Naive thymus-derived CD4-positive, alpha-beta T cell (primary cell): ENCODE measurements at regions of chr12 and their contacts with region 1.

Region 1: DNA sequence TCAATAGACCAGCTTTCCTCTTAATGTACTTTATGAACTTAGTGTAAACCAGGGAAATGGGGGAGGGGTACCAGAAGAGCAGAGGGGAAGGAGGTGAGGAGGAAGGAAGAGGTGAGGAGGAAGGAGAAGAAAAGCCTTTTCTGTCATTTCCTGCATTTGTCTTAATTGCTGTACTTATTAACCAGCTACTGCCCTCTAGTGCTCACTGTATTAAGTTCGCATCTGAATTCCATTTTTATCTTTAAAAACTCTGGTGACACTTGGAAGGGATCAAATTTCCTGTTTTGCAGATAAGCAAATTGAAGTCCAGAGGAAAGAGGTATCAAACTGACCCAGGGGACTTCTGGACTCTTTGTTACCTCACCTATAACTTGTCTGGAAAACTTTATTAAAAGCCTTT is 22.2 kb downstream of the MANSC1 start:
- DNase-seq: peak in 7 of 9 donors; percentile 37 to 74 (median 64)
- ATAC-seq: peak; percentile 89
- H3K4me3 ChIP-seq: no peak overlapping the region
- H3K4me3 Mint-ChIP-seq: peak overlapping the region in 1 of 10 donors; percentile 23
- H3K27ac ChIP-seq: peak overlapping the region; percentile 20
- H3K27ac Mint-ChIP-seq: peak overlapping the region in 7 of 9 donors; percentile 39 to 81 (median 72)
- H3K4me1 ChIP-seq: peaks cover 0 to 7% of the 10 kb centered on the region in 2 donors
- H3K4me1 Mint-ChIP-seq: peaks cover 3 to 14% (median 10%) of the 10 kb centered on the region in 7 donors
- H3K27me3 ChIP-seq: no peaks in the 10 kb centered on the region
- H3K27me3 Mint-ChIP-seq: no peaks in the 10 kb centered on the region

Region 2: GRCh38 chr12:10771132-10771733 is 1556.6 kb before region 1 on chr12:
- CTCF ChIA-PET with region 1: no interaction called
- POLR2A ChIA-PET with region 1: no interaction called
- intact Hi-C with region 1: loop called in 1 of 2 experiments (anchors 1 kb)
- DNase-seq: peak in 7 of 9 donors; percentile 9 to 56 (median 45)
- ATAC-seq: peak; percentile 63
- H3K4me3 ChIP-seq: no peak overlapping the region
- H3K4me3 Mint-ChIP-seq: no peak overlapping the region
- H3K27ac ChIP-seq: no peak overlapping the region
- H3K27ac Mint-ChIP-seq: no peak overlapping the region
- H3K4me1 ChIP-seq: no peaks in the 10 kb centered on the region
- H3K4me1 Mint-ChIP-seq: no peaks in the 10 kb centered on the region
- H3K27me3 ChIP-seq: no peaks in the 10 kb centered on the region
- H3K27me3 Mint-ChIP-seq: peaks cover 41 to 56% (median 52%) of the 10 kb centered on the region in 5 donors

Region 3: DNA sequence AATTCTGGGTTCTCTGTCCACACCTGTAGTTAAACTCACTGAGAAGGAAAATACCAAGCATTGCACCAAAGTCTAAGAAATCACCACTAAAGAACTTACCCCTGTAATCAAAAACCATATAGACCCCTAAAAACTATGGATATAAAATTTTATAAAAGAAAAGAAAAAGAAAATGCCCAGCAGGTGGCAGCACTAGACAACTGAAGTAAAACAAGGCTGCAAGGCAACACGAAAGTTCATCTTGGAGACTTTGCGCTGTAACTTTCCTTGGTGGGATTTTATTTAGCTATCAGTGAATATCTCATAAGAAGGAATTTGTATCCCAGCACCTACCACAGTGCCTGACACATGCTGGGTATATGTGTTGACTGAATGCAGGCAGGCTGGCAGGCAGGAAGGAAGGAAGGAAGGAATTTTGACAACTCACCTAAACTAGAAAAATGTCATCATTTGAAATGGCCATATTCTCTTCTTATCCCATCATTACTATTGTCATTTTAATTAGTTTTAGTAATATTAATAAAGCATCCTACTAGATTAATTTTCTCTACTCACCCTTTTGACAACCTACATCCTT is 746.5 kb before region 1 on chr12:
- CTCF ChIA-PET with region 1: interaction called, 7 read pairs
- POLR2A ChIA-PET with region 1: no interaction called
- intact Hi-C with region 1: loop called (anchors 1 kb)
- DNase-seq: peak; percentile 22 to 73 (median 64)
- ATAC-seq: peak; percentile 60
- H3K4me3 ChIP-seq: no peak overlapping the region
- H3K4me3 Mint-ChIP-seq: peak overlapping the region in 1 of 10 donors; percentile 65
- H3K27ac ChIP-seq: no peak overlapping the region
- H3K27ac Mint-ChIP-seq: peak overlapping the region in 2 of 9 donors; percentile 28 to 88
- H3K4me1 ChIP-seq: no peaks in the 10 kb centered on the region
- H3K4me1 Mint-ChIP-seq: peaks cover 0 to 10% (median 4%) of the 10 kb centered on the region in 7 donors
- H3K27me3 ChIP-seq: no peaks in the 10 kb centered on the region
- H3K27me3 Mint-ChIP-seq: peaks cover 0 to 14% (median 0%) of the 10 kb centered on the region in 5 donors

Region 4: GRCh38 chr12:12070674-12071656 is 256.8 kb before region 1 on chr12 and contains the start of gene BCL2L14:
- CTCF ChIA-PET with region 1: interaction called, 6 read pairs
- POLR2A ChIA-PET with region 1: no interaction called
- intact Hi-C with region 1: loop called in 1 of 2 experiments (anchors 2 kb)
- DNase-seq: peak in 6 of 9 donors; percentile 11 to 34 (median 24)
- ATAC-seq: peak; percentile 40
- H3K4me3 ChIP-seq: peak within 1 kb of the TSS; percentile 47
- H3K4me3 Mint-ChIP-seq: peak within 1 kb of the TSS; percentile 65 to 92 (median 79)
- H3K27ac ChIP-seq: peak within 1 kb of the TSS; percentile 58
- H3K27ac Mint-ChIP-seq: peak within 1 kb of the TSS; percentile 52 to 96 (median 90)
- H3K4me1 ChIP-seq: peaks cover 0 to 5% of the 10 kb centered on the region in 2 donors
- H3K4me1 Mint-ChIP-seq: peaks cover 13 to 37% (median 24%) of the 10 kb centered on the region in 7 donors
- H3K27me3 ChIP-seq: no peaks in the 10 kb centered on the region
- H3K27me3 Mint-ChIP-seq: peaks cover 0 to 8% (median 0%) of the 10 kb centered on the region in 5 donors
- total RNA-seq, gene BCL2L14: 0.92 to 7.6 (median 1.4) TPM

Region 5: DNA sequence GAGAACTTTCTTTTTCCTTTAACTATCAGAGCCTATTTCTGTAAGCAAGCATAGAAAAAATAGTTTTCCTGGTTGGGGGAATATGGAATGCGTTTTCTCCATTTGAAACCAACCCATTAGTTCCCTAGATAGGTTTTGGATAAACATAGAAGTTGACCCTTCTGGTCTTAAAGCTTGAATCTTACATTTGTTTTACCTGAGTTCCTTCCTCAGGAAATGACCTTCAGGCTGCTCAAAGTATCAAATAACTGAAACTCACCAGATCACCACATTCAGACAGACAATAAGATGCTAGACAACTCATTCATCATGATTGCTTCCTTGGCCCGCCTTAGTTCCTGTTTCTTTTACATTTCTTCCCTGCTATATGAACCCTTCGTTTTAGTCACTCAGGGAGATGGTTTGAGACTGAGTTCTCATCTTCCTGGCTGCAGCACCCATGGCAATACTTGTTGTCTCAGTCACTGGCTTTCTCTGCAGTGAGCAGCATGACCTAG is 113.1 kb before region 1 on chr12:
- CTCF ChIA-PET with region 1: no interaction called
- POLR2A ChIA-PET with region 1: no interaction called
- intact Hi-C with region 1: no loop called
- DNase-seq: no peak
- ATAC-seq: no peak
- H3K4me3 ChIP-seq: no peak overlapping the region
- H3K4me3 Mint-ChIP-seq: no peak overlapping the region
- H3K27ac ChIP-seq: no peak overlapping the region
- H3K27ac Mint-ChIP-seq: peak overlapping the region in 3 of 9 donors; percentile 15 to 43 (median 17)
- H3K4me1 ChIP-seq: peaks cover 0 to 12% of the 10 kb centered on the region in 2 donors
- H3K4me1 Mint-ChIP-seq: peaks cover 22 to 67% (median 47%) of the 10 kb centered on the region in 7 donors
- H3K27me3 ChIP-seq: no peaks in the 10 kb centered on the region
- H3K27me3 Mint-ChIP-seq: peaks cover 0 to 45% (median 0%) of the 10 kb centered on the region in 5 donors

Region 6: GRCh38 chr12:12266873-12267741 is 60.7 kb before region 1 on chr12 and contains the start of gene LRP6:
- CTCF ChIA-PET with region 1: interaction called, 3 read pairs
- POLR2A ChIA-PET with region 1: no interaction called
- intact Hi-C with region 1: loop called in 1 of 2 experiments (anchors 1 kb)
- DNase-seq: peak; percentile 57 to 83 (median 75)
- ATAC-seq: peak; percentile 91
- H3K4me3 ChIP-seq: peak within 1 kb of the TSS; percentile 86
- H3K4me3 Mint-ChIP-seq: peak within 1 kb of the TSS; percentile 79 to 93 (median 88)
- H3K27ac ChIP-seq: peak within 1 kb of the TSS; percentile 68
- H3K27ac Mint-ChIP-seq: peak within 1 kb of the TSS; percentile 29 to 88 (median 73)
- H3K4me1 ChIP-seq: peaks cover 8 to 10% of the 10 kb centered on the region in 2 donors
- H3K4me1 Mint-ChIP-seq: peaks cover 14 to 40% (median 31%) of the 10 kb centered on the region in 7 donors
- H3K27me3 ChIP-seq: peaks cover 0 to 10% of the 10 kb centered on the region in 2 donors
- H3K27me3 Mint-ChIP-seq: peaks cover 0 to 53% (median 14%) of the 10 kb centered on the region in 5 donors
- total RNA-seq, gene LRP6: 1.6 to 12.6 (median 7.4) TPM